Thyroid gland (tissue), 4 donors: ENCODE measurements at regions of chr7 and their contacts with region 1.

Region 1: GRCh38 chr7:99040104-99040958 is 103.6 kb downstream of the SMURF1 start:
- DNase-seq: peak; percentile 67 to 82
- H3K4me3 ChIP-seq: no peak overlapping the region
- H3K27ac ChIP-seq: peak overlapping the region in 1 of 3 donors; percentile 37
- H3K4me1 ChIP-seq: no peaks in the 10 kb centered on the region
- H3K27me3 ChIP-seq: no peaks in the 10 kb centered on the region
- CTCF ChIP-seq: peak; percentile 34 to 69 (median 59)
- POLR2A ChIP-seq: no peak

Region 2: DNA sequence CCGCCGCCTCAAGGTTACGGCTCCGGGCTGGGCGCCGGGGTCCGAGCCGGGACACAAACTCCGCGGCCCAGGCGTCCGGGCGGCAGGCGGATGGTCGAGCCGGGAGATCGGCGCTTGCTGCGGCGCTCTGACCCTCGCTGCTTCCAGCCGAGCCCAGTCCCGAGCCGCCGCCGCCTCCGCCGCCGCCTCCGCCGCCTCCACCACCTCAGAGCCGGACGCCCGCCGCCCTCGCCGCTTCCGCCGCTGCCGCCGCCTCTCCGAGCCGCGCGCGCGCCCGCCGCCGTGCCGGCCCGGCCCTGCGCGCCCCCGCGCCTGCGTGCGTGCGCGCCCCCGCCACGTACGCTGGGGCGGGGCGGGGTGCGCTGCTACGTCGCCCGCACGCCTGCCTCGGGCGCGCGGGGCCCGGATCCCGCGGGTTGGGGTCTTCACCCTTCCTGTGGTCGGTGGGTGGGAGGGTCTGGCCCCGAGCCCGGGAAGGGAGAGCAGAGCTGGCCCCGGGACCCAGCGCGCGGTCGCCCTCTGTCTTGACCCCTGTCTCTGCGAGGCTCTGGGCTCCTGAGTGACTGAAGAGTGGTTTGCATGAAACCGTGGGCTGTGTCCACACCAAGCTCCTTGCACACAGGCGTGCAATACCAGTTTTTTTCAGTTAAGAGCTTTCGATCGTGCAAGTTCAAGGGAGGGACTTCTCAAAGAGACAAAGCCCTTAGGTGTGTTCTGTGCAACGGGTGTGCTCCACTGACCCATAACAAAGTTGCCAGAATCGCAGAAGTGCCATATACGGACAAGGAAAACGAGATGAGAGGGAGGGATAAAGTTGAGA is 103.7 kb after region 1 on chr7 and contains the start of gene SMURF1:
- intact Hi-C with region 1: loop called (anchors 5 kb)
- DNase-seq: peak; percentile 63 to 64
- H3K4me3 ChIP-seq: peak within 1 kb of the TSS; percentile 68 to 98 (median 70)
- H3K27ac ChIP-seq: peak within 1 kb of the TSS; percentile 85 to 97 (median 87)
- H3K4me1 ChIP-seq: peaks cover 12 to 16% of the 10 kb centered on the region in 2 donors
- H3K27me3 ChIP-seq: no peaks in the 10 kb centered on the region
- CTCF ChIP-seq: no peak
- POLR2A ChIP-seq: peak in 1 of 2 donors; percentile 62
- total RNA-seq, gene SMURF1: 13.9 to 20.6 (median 16.7) TPM

Region 3: DNA sequence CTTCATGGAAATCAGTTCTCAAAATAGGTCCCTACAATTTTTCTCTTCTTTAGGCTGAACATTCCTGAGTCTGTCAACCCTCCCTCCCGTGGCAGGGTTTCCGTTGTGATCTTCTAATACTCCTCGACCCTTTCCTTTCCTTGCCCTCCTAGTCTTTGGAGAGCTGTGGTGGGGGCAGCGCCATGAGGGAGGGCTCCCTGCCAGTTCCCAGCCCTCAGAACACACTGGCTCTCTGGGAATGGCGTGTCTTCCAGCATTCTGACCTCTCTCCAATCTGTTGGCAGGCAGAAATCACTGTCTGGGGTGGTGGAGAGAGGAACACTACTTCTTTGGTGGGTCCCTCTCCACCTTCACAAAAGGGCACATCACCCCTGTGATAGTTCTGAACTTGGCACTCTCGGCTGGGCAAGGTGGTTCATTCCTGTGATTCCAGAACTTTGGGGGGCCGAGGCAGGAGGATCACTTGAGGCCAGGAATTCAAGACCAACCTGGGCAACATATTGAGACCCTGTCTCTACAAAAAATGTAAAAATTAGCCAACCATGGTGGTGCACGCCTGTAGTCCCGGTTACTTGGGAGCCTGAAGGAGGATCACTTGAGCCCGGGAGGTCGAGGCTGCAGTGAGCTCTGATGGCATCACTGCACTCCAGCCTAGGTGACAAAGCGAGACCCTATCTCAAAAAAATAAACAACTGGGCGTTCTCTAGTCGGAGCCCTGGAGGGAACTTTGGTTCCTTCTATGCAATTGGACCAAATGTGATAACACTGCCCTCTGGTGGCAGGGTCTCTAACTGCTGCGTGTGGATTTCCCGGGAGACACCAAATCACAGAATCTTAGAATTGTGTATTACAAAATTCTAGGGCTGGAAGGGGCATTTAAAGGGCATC is 272.2 kb after region 1 on chr7:
- intact Hi-C with region 1: loop called (anchors 5 kb)
- DNase-seq: peak; percentile 61 to 65
- H3K4me3 ChIP-seq: no peak overlapping the region
- H3K27ac ChIP-seq: no peak overlapping the region
- H3K4me1 ChIP-seq: no peaks in the 10 kb centered on the region
- H3K27me3 ChIP-seq: no peaks in the 10 kb centered on the region
- CTCF ChIP-seq: peak; percentile 63 to 87 (median 75)
- POLR2A ChIP-seq: no peak

Region 4: GRCh38 chr7:99408379-99409191 is 368.3 kb after region 1 on chr7 and contains the starts of genes BUD31 and PDAP1:
- intact Hi-C with region 1: loop called (anchors 10 kb)
- DNase-seq: peak; percentile 93 to 94
- H3K4me3 ChIP-seq: peak within 1 kb of the TSS; percentile 93 to 100 (median 96)
- H3K27ac ChIP-seq: peak within 1 kb of the TSS; percentile 96 to 99 (median 99)
- H3K4me1 ChIP-seq: peaks cover 23 to 29% of the 10 kb centered on the region in 2 donors
- H3K27me3 ChIP-seq: no peaks in the 10 kb centered on the region
- CTCF ChIP-seq: peak in 3 of 6 experiments; percentile 24 to 35 (median 29)
- POLR2A ChIP-seq: peak in 1 of 2 donors; percentile 88
- total RNA-seq, gene BUD31: 41.9 to 89.1 (median 65.4) TPM
- total RNA-seq, gene PDAP1: 73.9 to 112 (median 93.2) TPM